Activated B cell treated with CpG ODN at 0.5 μM for 24 hours (primary cell): ENCODE measurements at regions of chr7 and their contacts with region 1.

Region 1: DNA sequence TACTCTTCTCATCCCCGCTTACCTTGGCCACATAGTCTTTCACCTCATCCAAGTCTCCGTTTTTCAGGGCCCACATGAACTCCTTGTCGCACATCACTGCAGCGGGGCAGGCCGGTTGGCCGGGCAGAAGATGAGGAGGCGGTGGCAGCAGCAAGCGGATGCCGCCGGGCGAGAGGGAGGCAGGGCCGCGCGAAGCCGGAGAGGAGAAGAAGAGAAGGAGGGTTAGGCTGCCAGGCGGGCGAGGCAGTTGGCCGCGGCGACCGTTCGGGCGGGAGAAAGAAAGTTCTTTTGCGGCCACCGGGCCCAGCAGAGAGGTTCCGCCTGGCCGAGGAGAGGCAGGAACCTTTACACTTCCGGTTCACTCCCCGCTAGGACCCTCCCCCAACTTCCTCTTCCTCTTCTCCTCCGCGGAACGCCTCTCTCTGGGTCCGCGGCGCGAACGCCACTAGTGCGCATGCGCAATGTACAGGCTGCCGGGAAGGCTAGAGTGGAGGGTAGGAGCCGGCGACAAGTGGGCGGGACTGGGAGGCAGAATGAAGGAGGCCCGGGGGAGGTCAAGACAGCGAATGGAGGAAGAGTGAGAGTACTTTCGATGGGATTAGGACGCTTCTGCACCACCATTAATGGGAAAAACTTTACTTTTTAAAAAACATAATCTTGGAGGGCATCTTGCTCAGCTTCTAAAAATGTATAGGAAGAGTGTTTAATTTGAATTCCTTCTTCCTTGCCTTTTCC is at the start of gene MTPN:
- DNase-seq: peak; percentile 92
- ATAC-seq: peak; percentile 75
- H3K4me3 Mint-ChIP-seq: peak within 1 kb of the TSS; percentile 99
- H3K27ac Mint-ChIP-seq: peak within 1 kb of the TSS; percentile 99
- H3K4me1 Mint-ChIP-seq: peaks cover 89% of the 10 kb centered on the region
- H3K27me3 Mint-ChIP-seq: no peaks in the 10 kb centered on the region
- CTCF ChIP-seq: no peak
- total RNA-seq, gene MTPN: 130 and 137 TPM in 2 replicates

Region 2: DNA sequence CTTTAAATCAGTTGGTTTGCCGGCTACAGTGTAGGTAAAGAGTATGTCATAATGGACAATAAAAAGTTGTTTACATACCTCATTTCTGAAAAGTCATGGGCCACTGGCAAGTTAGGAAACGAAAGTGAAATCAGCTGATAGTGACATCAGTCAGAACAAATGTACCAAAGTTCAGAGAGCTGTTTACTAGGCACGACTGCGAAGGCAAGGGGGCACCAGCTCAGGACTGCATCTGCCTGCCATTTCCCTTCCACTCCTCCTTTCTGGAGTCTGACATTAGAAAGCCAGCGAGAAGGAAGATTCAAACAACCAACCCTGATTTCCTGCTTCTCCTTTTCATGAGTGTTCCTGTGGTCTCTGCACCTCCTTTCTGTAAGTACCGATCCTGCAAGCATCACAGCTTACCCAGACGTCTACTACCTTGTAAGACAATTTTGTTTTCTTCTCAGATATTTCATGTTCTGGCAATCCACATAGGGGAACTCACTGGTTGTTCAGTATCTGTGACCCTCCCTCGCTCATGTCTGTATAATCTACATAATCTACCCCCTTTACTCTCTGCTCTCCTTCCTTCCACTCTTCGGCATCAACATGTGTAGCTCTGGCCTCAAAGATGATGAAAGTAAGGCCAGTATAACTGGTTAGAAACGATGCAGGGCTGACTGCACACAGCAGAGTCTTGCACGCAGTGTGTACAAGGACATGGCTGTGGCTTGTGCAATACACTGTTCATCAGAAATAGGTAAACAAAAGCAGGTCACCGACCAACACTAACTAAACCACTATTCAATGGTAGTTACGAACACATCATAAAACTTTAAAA is 829.1 kb before region 1 on chr7 and contains the start of gene TMEM140:
- CTCF ChIA-PET with region 1: no interaction called
- POLR2A ChIA-PET with region 1: no interaction called
- intact Hi-C with region 1: loop called (anchors 5 kb)
- DNase-seq: no peak
- ATAC-seq: peak; percentile 72
- H3K4me3 Mint-ChIP-seq: peak within 1 kb of the TSS; percentile 83
- H3K27ac Mint-ChIP-seq: peak within 1 kb of the TSS; percentile 93
- H3K4me1 Mint-ChIP-seq: peaks cover 73% of the 10 kb centered on the region
- H3K27me3 Mint-ChIP-seq: no peaks in the 10 kb centered on the region
- CTCF ChIP-seq: no peak
- total RNA-seq, gene TMEM140: 18.6 and 20.9 TPM in 2 replicates

Region 3: GRCh38 chr7:135509903-135510602 is 467.1 kb before region 1 on chr7 and contains the start of gene CNOT4:
- CTCF ChIA-PET with region 1: no interaction called
- POLR2A ChIA-PET with region 1: no interaction called
- intact Hi-C with region 1: loop called (anchors 2 kb)
- DNase-seq: peak; percentile 87
- ATAC-seq: peak; percentile 96
- H3K4me3 Mint-ChIP-seq: no peak within 1 kb of the TSS
- H3K27ac Mint-ChIP-seq: no peak within 1 kb of the TSS
- H3K4me1 Mint-ChIP-seq: peaks cover 10% of the 10 kb centered on the region
- H3K27me3 Mint-ChIP-seq: no peaks in the 10 kb centered on the region
- CTCF ChIP-seq: no peak
- total RNA-seq, gene CNOT4: 34.4 and 36.8 TPM in 2 replicates

Region 4: GRCh38 chr7:135662373-135663114 is 314.6 kb before region 1 on chr7 and contains the start of gene STMP1:
- CTCF ChIA-PET with region 1: no interaction called
- POLR2A ChIA-PET with region 1: interaction called, 6 read pairs
- intact Hi-C with region 1: loop called (anchors 1 kb)
- DNase-seq: peak; percentile 96
- ATAC-seq: peak; percentile 98
- H3K4me3 Mint-ChIP-seq: peak within 1 kb of the TSS; percentile 91
- H3K27ac Mint-ChIP-seq: peak within 1 kb of the TSS; percentile 79
- H3K4me1 Mint-ChIP-seq: peaks cover 39% of the 10 kb centered on the region
- H3K27me3 Mint-ChIP-seq: no peaks in the 10 kb centered on the region
- CTCF ChIP-seq: no peak
- total RNA-seq, gene STMP1: 24.2 and 26.2 TPM in 2 replicates

Region 5: GRCh38 chr7:135965602-135966001 is 11.6 kb before region 1 on chr7:
- CTCF ChIA-PET with region 1: interaction called, 3 read pairs
- POLR2A ChIA-PET with region 1: interaction called, 11 read pairs
- intact Hi-C with region 1: loop called (anchors 2 kb)
- DNase-seq: no peak
- ATAC-seq: no peak
- H3K4me3 Mint-ChIP-seq: peak overlapping the region; percentile 60
- H3K27ac Mint-ChIP-seq: peak overlapping the region; percentile 70
- H3K4me1 Mint-ChIP-seq: peaks cover 90% of the 10 kb centered on the region
- H3K27me3 Mint-ChIP-seq: no peaks in the 10 kb centered on the region
- CTCF ChIP-seq: no peak

Region 6: GRCh38 chr7:136009488-136010079 is 32.4 kb after region 1 on chr7:
- CTCF ChIA-PET with region 1: interaction called, 3 read pairs
- POLR2A ChIA-PET with region 1: no interaction called
- intact Hi-C with region 1: loop called (anchors 1 kb)
- DNase-seq: no peak
- ATAC-seq: no peak
- H3K4me3 Mint-ChIP-seq: no peak overlapping the region
- H3K27ac Mint-ChIP-seq: no peak overlapping the region
- H3K4me1 Mint-ChIP-seq: peaks cover 6% of the 10 kb centered on the region
- H3K27me3 Mint-ChIP-seq: peaks cover 6% of the 10 kb centered on the region
- CTCF ChIP-seq: peak; percentile 86

Region 7: GRCh38 chr7:136074831-136075230 is 97.7 kb after region 1 on chr7:
- CTCF ChIA-PET with region 1: no interaction called
- POLR2A ChIA-PET with region 1: no interaction called
- intact Hi-C with region 1: no loop called
- DNase-seq: no peak
- ATAC-seq: no peak
- H3K4me3 Mint-ChIP-seq: no peak overlapping the region
- H3K27ac Mint-ChIP-seq: no peak overlapping the region
- H3K4me1 Mint-ChIP-seq: no peaks in the 10 kb centered on the region
- H3K27me3 Mint-ChIP-seq: no peaks in the 10 kb centered on the region
- CTCF ChIP-seq: no peak